HEK293 (cell line): ENCODE measurements at regions of chr2 and their contacts with region 1.

Region 1: DNA sequence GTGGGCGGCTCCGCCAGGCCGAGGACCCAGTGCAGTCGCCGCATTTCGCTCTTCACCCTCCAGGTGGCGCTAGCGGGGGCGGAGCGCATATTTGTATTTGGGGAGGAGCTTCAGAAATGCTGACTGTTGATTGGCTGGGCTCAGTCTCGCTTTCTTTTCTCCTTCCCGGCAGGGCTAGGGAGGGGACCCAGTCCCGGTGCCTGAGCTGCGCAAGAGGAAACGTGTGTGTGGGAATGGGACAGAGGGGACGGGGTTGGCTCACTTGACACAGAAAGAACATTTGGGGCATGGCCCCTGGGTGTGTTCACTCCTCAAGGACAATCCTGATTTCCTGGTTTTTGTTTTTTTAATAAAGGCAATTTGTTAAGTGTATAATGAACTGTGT is 20.3 kb upstream of the DNMT3A start:
- H3K4me3 ChIP-seq: no peak overlapping the region
- H3K27ac ChIP-seq: no peak overlapping the region
- H3K4me1 ChIP-seq: no peaks in the 10 kb centered on the region
- CTCF ChIP-seq: peak; percentile 92

Region 2: GRCh38 chr2:25309402-25309801 is 52.6 kb before region 1 on chr2:
- CTCF ChIA-PET with region 1: interaction called, 12 read pairs
- POLR2A ChIA-PET with region 1: interaction called, 3 read pairs
- H3K4me3 ChIP-seq: no peak overlapping the region
- H3K27ac ChIP-seq: no peak overlapping the region
- H3K4me1 ChIP-seq: peaks cover 3% of the 10 kb centered on the region; the same call in 1 of the 2 replicates
- CTCF ChIP-seq: 0 out of 2 replicates have a peak, but pooled peaks have one; percentile 13

Region 3: GRCh38 chr2:25342372-25343186 is 19.5 kb before region 1 on chr2:
- CTCF ChIA-PET with region 1: interaction called, 19 read pairs
- POLR2A ChIA-PET with region 1: no interaction called
- H3K4me3 ChIP-seq: peak overlapping the region; percentile 64
- H3K27ac ChIP-seq: peak overlapping the region; percentile 87; the same call in 1 of the 2 replicates
- H3K4me1 ChIP-seq: peaks cover 8% of the 10 kb centered on the region
- CTCF ChIP-seq: peak; percentile 95

Region 4: GRCh38 chr2:25376750-25377621 is 14.9 kb after region 1 on chr2:
- CTCF ChIA-PET with region 1: interaction called, 41 read pairs
- POLR2A ChIA-PET with region 1: interaction called, 3 read pairs
- H3K4me3 ChIP-seq: peak overlapping the region; percentile 4; the same call in 1 of the 2 replicates
- H3K27ac ChIP-seq: peak overlapping the region; percentile 56; the same call in 1 of the 2 replicates
- H3K4me1 ChIP-seq: peaks cover 5% of the 10 kb centered on the region
- CTCF ChIP-seq: peak; percentile 60; the same call in 1 of the 2 replicates

Region 5: GRCh38 chr2:25383806-25384205 is 21.8 kb after region 1 on chr2:
- CTCF ChIA-PET with region 1: interaction called, 17 read pairs
- POLR2A ChIA-PET with region 1: no interaction called
- H3K4me3 ChIP-seq: no peak overlapping the region
- H3K27ac ChIP-seq: no peak overlapping the region
- H3K4me1 ChIP-seq: no peaks in the 10 kb centered on the region
- CTCF ChIP-seq: no peak

Region 6: DNA sequence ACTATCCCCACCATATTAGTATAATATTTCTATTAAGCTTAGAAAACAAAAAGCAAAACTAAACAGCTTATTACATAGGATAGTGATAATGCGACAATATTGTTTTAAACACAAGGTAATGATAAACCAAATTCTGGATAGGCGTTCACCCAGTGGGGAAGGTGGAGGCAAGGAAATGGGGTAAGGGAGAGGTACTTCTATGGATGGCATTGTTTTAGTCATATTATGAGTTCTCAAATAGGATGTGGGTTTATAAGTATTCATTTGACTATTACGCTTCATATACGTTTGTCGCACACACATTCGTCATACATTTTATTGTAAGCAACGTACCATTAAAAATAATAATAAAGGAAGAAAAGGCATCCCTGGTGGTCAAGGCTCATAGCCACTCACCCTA is 68.5 kb after region 1 on chr2:
- CTCF ChIA-PET with region 1: no interaction called
- POLR2A ChIA-PET with region 1: no interaction called
- H3K4me3 ChIP-seq: no peak overlapping the region
- H3K27ac ChIP-seq: no peak overlapping the region
- H3K4me1 ChIP-seq: no peaks in the 10 kb centered on the region
- CTCF ChIP-seq: no peak

Region 7: DNA sequence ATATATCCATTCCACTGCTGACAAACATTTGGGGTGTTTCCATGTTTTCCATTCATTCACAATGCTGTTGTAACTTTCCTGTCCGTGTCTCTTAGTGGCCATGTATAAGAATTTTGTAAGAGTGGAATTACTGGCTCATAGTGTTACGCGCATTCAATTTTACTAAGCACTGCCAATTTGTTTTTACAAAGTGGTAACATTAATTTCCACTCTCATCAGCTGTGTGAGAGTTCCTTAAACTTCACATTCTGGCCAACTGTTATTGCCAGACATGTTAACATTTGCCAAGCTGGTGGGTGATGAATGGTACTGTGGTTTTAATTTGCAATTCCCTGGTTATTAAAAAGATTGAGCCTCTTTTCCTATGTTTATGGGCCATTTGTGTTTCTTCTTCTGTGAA is 177.1 kb after region 1 on chr2:
- CTCF ChIA-PET with region 1: no interaction called
- POLR2A ChIA-PET with region 1: no interaction called
- H3K4me3 ChIP-seq: no peak overlapping the region
- H3K27ac ChIP-seq: no peak overlapping the region
- H3K4me1 ChIP-seq: no peaks in the 10 kb centered on the region
- CTCF ChIP-seq: no peak